Sciatic nerve (tissue), 2 donors: ENCODE measurements at regions of chr6 and their contacts with region 1.

Region 1: GRCh38 chr6:121934451-121934850 is 465.0 kb upstream of the HSF2 start:
- DNase-seq: no peak
- ATAC-seq: no peak

Region 2: DNA sequence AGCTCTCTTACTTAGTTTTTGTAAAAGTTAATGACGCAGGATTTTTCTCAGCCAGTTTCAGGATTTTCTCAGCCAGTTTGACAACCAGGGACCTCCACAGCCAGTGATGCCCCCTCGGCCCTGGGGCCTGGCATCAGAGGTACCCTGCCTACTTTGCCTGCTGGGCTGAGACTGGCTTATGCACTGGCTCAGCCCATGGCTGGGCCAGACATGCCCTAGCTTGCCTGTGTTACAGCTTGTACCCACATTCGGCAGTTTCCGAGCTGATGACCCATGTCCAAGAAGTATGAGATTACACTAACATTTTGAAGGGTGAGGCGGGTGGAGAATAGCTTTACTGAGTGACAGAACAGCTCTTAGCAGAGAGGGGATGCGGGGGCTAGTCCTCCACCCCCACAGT is 58.9 kb after region 1 on chr6:
- intact Hi-C with region 1: loop called (anchors 2 kb)
- DNase-seq: no peak
- ATAC-seq: no peak